Endothelial cell of umbilical vein (primary cell): ENCODE measurements at regions of chr12 and their contacts with region 1.

Region 1: DNA sequence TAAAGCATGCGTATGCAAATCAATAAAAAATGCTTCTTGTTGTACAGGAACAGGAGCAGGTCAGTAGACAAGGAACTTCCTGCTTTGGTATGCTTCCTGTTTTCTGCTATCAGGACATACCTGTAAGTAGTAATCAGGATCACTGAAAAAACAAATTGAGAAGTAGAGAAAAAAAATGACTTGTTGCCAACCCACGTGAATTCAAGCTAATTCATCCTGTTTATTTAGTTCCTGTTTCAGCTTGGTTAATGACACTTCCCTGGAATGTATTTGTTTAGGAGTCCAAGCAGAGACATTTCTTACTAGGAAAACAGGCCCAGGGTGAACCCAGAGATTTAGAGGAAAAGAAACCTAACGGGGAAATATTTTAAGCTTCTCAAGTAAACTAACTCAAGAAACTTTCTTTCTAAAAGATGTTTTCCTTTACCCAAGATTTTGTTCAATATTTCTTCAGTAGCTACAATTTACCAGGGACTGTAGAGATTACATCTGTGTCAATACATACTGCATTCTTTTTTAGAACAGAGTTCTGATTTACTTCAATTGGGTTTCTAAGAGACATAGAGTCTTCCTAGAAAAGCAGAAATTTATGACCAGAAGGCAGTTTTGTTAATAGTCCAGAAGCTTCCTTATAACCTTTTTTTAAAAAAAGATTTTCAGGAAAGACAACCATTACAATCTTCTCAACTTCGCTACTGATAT is 124.1 kb downstream of the PAWR start:
- DNase-seq: peak; percentile 89
- H3K4me3 ChIP-seq: no peak overlapping the region
- H3K27ac ChIP-seq: peak overlapping the region; percentile 65
- H3K4me1 ChIP-seq: peaks cover 28% of the 10 kb centered on the region
- H3K27me3 ChIP-seq: no peaks in the 10 kb centered on the region
- CTCF ChIP-seq: no peak
- POLR2A ChIP-seq: peak; percentile 53

Region 2: GRCh38 chr12:79624378-79624777 is 57.8 kb after region 1 on chr12:
- CTCF ChIA-PET with region 1: no interaction called
- POLR2A ChIA-PET with region 1: no interaction called
- dilution Hi-C with region 1: no loop called
- intact Hi-C with region 1: loop called (anchors 5 kb)
- DNase-seq: no peak
- H3K4me3 ChIP-seq: no peak overlapping the region
- H3K27ac ChIP-seq: no peak overlapping the region
- H3K4me1 ChIP-seq: no peaks in the 10 kb centered on the region
- H3K27me3 ChIP-seq: no peaks in the 10 kb centered on the region
- CTCF ChIP-seq: no peak
- POLR2A ChIP-seq: no peak

Region 3: GRCh38 chr12:79634957-79635471 is 68.4 kb after region 1 on chr12:
- CTCF ChIA-PET with region 1: no interaction called
- POLR2A ChIA-PET with region 1: no interaction called
- dilution Hi-C with region 1: no loop called
- intact Hi-C with region 1: no loop called
- DNase-seq: no peak
- H3K4me3 ChIP-seq: no peak overlapping the region
- H3K27ac ChIP-seq: no peak overlapping the region
- H3K4me1 ChIP-seq: no peaks in the 10 kb centered on the region
- H3K27me3 ChIP-seq: no peaks in the 10 kb centered on the region
- CTCF ChIP-seq: no peak
- POLR2A ChIP-seq: no peak

Region 4: GRCh38 chr12:79665212-79665887 is 98.7 kb after region 1 on chr12:
- CTCF ChIA-PET with region 1: no interaction called
- POLR2A ChIA-PET with region 1: no interaction called
- dilution Hi-C with region 1: no loop called
- intact Hi-C with region 1: no loop called
- DNase-seq: peak; percentile 34
- H3K4me3 ChIP-seq: no peak overlapping the region
- H3K27ac ChIP-seq: no peak overlapping the region
- H3K4me1 ChIP-seq: peaks cover 5% of the 10 kb centered on the region
- H3K27me3 ChIP-seq: no peaks in the 10 kb centered on the region
- CTCF ChIP-seq: no peak
- POLR2A ChIP-seq: no peak